ENCODE measurements at regions of chr1 and their contacts with region 1.

Region 1: DNA sequence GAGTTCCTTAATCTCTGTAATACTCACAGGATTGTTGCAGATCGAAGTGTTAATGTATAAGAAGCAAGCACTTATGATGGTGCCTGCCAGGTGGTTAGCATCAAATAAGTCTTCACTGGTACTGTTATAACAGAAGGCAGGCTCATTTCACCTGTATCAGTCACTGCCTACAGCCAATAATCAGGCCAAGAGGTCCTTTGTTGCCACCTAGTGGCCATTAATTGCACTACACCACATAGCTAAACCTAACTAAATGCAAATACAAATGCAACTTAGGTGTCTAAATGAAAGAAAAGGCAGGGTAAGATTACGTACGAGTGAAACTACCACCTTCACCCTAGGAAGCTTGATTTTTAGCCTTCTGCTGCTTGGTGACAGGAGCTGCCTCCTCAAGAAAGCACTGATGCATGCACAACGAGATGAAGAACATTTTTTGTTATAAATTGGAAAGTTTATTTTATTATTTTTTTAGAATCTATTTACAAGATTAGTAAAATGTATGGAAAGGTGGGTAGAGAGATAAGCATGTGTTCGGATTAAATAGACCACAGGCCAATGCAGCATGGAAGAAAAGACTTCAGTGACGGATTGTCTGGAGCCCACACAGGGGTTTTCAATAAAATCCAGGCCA is 334.8 kb upstream of the CAMK1G start:
- DNase-seq: peak; percentile 56
- H3K4me3 ChIP-seq: no peak overlapping the region
- H3K27ac ChIP-seq: no peak overlapping the region
- H3K4me1 ChIP-seq: peaks cover 13% of the 10 kb centered on the region
- H3K27me3 ChIP-seq: no peaks in the 10 kb centered on the region
- CTCF ChIP-seq: peak; percentile 92 to 95

Region 2: DNA sequence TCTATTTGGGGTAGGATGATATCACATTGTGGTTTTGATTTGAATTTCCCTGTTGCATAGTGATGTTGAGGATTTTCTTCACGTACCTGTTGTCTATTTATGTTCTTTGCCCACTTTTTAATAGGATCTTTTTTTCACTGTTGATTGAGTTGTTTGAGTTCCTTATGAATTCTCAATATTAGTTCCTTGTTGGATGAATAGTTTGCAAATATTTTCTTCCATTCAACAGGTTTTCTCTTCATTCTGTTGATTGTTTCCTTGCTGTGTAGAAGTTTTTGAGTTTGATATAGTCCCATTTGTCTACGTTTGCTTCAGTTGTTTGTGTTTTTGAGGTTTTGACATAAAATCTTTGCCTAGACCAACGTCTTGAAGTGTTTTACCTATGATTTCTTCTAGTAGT is 34.8 kb before region 1 on chr1:
- CTCF ChIA-PET with region 1: interaction called, 3 read pairs
- dilution Hi-C with region 1: loop called (anchors 5 kb)
- in situ Hi-C with region 1: no loop called
- intact Hi-C with region 1: no loop called
- DNase-seq: no peak
- H3K4me3 ChIP-seq: no peak overlapping the region
- H3K27ac ChIP-seq: no peak overlapping the region
- H3K4me1 ChIP-seq: peaks cover 2% of the 10 kb centered on the region
- H3K27me3 ChIP-seq: no peaks in the 10 kb centered on the region
- CTCF ChIP-seq: no peak

Region 3: GRCh38 chr1:209490013-209490412 is 241.2 kb after region 1 on chr1:
- CTCF ChIA-PET with region 1: no interaction called
- dilution Hi-C with region 1: no loop called
- in situ Hi-C with region 1: no loop called
- intact Hi-C with region 1: loop called (anchors 1 kb)
- DNase-seq: peak; percentile 26
- H3K4me3 ChIP-seq: no peak overlapping the region
- H3K27ac ChIP-seq: no peak overlapping the region
- H3K4me1 ChIP-seq: peaks cover 26% of the 10 kb centered on the region
- H3K27me3 ChIP-seq: no peaks in the 10 kb centered on the region
- CTCF ChIP-seq: peak; percentile 74 to 77

Measured in mammary epithelial cell (primary cell).